ENCODE measurements at regions of chr6 and their contacts with region 1.

Region 1: GRCh38 chr6:169831450-169832246 is 80.2 kb downstream of the ERMARD start:
- DNase-seq: peak; percentile 77
- ATAC-seq: peak; percentile 82
- H3K4me3 Mint-ChIP-seq: no peak overlapping the region
- H3K27ac Mint-ChIP-seq: no peak overlapping the region
- H3K4me1 Mint-ChIP-seq: peaks cover 4% of the 10 kb centered on the region
- H3K27me3 Mint-ChIP-seq: peaks cover 51% of the 10 kb centered on the region

Region 2: GRCh38 chr6:169746556-169746955 is 85.1 kb before region 1 on chr6:
- CTCF ChIA-PET with region 1: no interaction called
- POLR2A ChIA-PET with region 1: no interaction called
- DNase-seq: no peak
- ATAC-seq: no peak
- H3K4me3 Mint-ChIP-seq: no peak overlapping the region
- H3K27ac Mint-ChIP-seq: no peak overlapping the region
- H3K4me1 Mint-ChIP-seq: peaks cover 11% of the 10 kb centered on the region
- H3K27me3 Mint-ChIP-seq: peaks cover 7% of the 10 kb centered on the region

Region 3: GRCh38 chr6:169789982-169790927 is 41.4 kb before region 1 on chr6:
- CTCF ChIA-PET with region 1: interaction called, 14 read pairs
- POLR2A ChIA-PET with region 1: no interaction called
- DNase-seq: peak; percentile 76
- ATAC-seq: peak; percentile 97
- H3K4me3 Mint-ChIP-seq: peak overlapping the region; percentile 67
- H3K27ac Mint-ChIP-seq: no peak overlapping the region
- H3K4me1 Mint-ChIP-seq: peaks cover 14% of the 10 kb centered on the region
- H3K27me3 Mint-ChIP-seq: peaks cover 54% of the 10 kb centered on the region

Region 4: DNA sequence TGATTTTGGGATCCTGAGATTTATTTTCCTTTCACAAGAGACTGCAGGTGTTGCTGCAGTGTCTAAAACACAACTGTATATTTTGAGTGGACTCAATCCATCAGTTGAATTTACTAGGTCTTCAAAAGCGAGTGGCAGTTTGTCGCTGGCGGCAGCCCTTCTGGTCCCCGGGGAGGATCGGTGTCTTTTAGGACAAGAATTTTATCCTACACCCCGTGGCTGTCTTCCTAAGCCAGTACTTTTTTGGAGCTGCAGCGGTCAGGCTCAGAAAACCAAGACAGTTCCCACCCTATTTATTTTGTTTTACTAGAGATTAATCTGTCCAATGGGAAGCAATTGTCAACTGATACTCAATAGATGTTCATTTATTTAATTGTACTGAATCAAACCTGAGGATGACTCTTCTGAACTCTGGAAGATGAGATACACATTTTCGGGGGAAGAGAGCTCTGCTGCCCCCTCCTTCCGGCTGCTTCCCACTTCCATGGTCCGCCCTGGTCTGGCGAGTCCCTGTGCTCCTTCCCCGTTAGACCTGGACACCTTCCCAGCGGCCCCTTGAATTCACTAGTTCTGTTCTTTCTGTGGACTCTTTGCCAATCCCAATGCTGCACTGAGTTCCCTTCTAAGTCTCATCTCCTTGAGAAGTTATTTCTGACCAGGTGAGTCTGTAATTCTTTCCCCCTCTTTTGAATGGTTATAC is 10.4 kb after region 1 on chr6:
- CTCF ChIA-PET with region 1: interaction called, 16 read pairs
- POLR2A ChIA-PET with region 1: no interaction called
- DNase-seq: no peak
- ATAC-seq: no peak
- H3K4me3 Mint-ChIP-seq: no peak overlapping the region
- H3K27ac Mint-ChIP-seq: no peak overlapping the region
- H3K4me1 Mint-ChIP-seq: peaks cover 1% of the 10 kb centered on the region
- H3K27me3 Mint-ChIP-seq: peaks cover 17% of the 10 kb centered on the region

Region 5: DNA sequence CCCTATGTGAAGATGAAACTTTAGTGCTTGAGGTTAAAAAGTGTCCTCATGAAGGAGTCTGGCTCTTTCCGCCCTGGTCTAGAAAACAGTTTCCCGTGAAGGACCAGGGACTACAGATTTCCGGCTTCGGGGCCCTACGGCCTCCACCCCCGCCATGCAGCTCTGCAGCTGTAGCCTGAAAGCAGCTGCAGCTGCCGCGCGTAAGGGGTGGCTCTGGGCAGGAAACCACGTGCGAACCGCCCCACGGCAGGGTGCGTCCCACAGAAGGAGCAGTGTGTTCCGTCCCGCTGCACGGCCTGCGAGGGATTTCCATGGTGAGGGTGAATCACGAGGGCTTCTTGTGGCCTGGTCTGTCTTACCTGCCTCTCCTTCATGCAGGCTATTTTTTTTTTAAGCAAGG is 36.8 kb after region 1 on chr6:
- CTCF ChIA-PET with region 1: interaction called, 23 read pairs
- POLR2A ChIA-PET with region 1: no interaction called
- DNase-seq: peak; percentile 83
- ATAC-seq: peak; percentile 95
- H3K4me3 Mint-ChIP-seq: no peak overlapping the region
- H3K27ac Mint-ChIP-seq: peak overlapping the region; percentile 50
- H3K4me1 Mint-ChIP-seq: peaks cover 15% of the 10 kb centered on the region
- H3K27me3 Mint-ChIP-seq: peaks cover 9% of the 10 kb centered on the region

Region 6: GRCh38 chr6:170516783-170517616 is 685.4 kb after region 1 on chr6:
- CTCF ChIA-PET with region 1: interaction called, 26 read pairs
- POLR2A ChIA-PET with region 1: no interaction called
- DNase-seq: peak; percentile 59
- ATAC-seq: peak; percentile 90
- H3K4me3 Mint-ChIP-seq: no peak overlapping the region
- H3K27ac Mint-ChIP-seq: no peak overlapping the region
- H3K4me1 Mint-ChIP-seq: peaks cover 8% of the 10 kb centered on the region
- H3K27me3 Mint-ChIP-seq: peaks cover 64% of the 10 kb centered on the region

Region 7: GRCh38 chr6:170529839-170530469 is 698.3 kb after region 1 on chr6:
- CTCF ChIA-PET with region 1: interaction called, 32 read pairs
- POLR2A ChIA-PET with region 1: no interaction called
- DNase-seq: peak; percentile 80
- ATAC-seq: peak; percentile 76
- H3K4me3 Mint-ChIP-seq: no peak overlapping the region
- H3K27ac Mint-ChIP-seq: no peak overlapping the region
- H3K4me1 Mint-ChIP-seq: peaks cover 12% of the 10 kb centered on the region
- H3K27me3 Mint-ChIP-seq: peaks cover 14% of the 10 kb centered on the region